ENCODE measurements at regions of chr12 and their contacts with region 1.

Region 1: DNA sequence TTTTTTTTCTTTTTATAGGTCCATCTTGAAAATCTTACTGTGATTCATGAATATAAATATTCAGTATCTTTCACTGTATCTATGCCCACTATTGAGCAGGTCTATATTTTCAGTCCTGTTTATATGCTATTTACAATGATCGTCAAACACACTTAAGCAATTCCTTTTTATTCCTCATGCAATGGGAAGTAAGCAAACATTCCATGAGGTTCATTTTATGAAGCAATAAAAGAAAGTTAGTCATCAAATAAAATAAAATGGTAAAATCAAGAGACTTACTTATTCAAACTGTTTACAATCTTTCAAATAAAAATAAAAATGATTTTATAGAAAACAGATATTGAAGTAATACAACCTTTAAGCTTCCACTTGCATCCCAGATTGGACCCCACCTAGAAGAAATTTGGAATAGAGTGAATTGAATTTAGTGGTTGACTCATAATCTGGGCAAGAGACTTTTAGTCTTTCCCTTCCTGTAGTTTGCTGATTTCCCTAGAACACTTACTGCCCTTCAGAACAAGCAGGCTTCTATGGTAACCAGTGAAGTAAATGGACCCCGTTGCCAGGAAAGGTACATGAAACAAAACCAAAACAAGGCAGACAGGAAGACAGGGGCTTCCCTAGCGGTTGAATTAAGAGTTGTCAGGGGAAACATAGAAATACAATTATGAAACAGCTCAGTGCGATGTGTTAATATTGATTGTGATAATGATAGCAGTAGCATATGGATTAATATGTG is 241.0 kb upstream of the ATP2B1 start:
- DNase-seq: peak in 7 of 9 donors; percentile 66 to 89 (median 81)
- ATAC-seq: peak; percentile 95
- H3K4me3 ChIP-seq: peak overlapping the region; percentile 2
- H3K4me3 Mint-ChIP-seq: peak overlapping the region in 9 of 10 donors; percentile 1 to 76 (median 64)
- H3K27ac ChIP-seq: peak overlapping the region; percentile 53
- H3K27ac Mint-ChIP-seq: peak overlapping the region in 8 of 9 donors; percentile 62 to 89 (median 76)
- H3K4me1 ChIP-seq: peaks cover 24 to 33% of the 10 kb centered on the region in 2 donors
- H3K4me1 Mint-ChIP-seq: peaks cover 20 to 58% (median 44%) of the 10 kb centered on the region in 7 donors
- H3K27me3 ChIP-seq: no peaks in the 10 kb centered on the region
- H3K27me3 Mint-ChIP-seq: no peaks in the 10 kb centered on the region

Region 2: GRCh38 chr12:89621521-89621920 is 328.1 kb before region 1 on chr12:
- CTCF ChIA-PET with region 1: no interaction called
- POLR2A ChIA-PET with region 1: no interaction called
- intact Hi-C with region 1: loop called in 1 of 2 experiments (anchors 5 kb)
- DNase-seq: no peak
- ATAC-seq: no peak
- H3K4me3 ChIP-seq: no peak overlapping the region
- H3K4me3 Mint-ChIP-seq: no peak overlapping the region
- H3K27ac ChIP-seq: no peak overlapping the region
- H3K27ac Mint-ChIP-seq: no peak overlapping the region
- H3K4me1 ChIP-seq: no peaks in the 10 kb centered on the region
- H3K4me1 Mint-ChIP-seq: peaks cover 0 to 4% (median 0%) of the 10 kb centered on the region in 7 donors
- H3K27me3 ChIP-seq: no peaks in the 10 kb centered on the region
- H3K27me3 Mint-ChIP-seq: no peaks in the 10 kb centered on the region

Region 3: GRCh38 chr12:89756585-89757321 is 192.9 kb before region 1 on chr12:
- CTCF ChIA-PET with region 1: interaction called, 3 read pairs
- POLR2A ChIA-PET with region 1: no interaction called
- intact Hi-C with region 1: loop called in 1 of 2 experiments (anchors 5 kb)
- DNase-seq: peak in 3 of 9 donors; percentile 11 to 31 (median 12)
- ATAC-seq: peak; percentile 86
- H3K4me3 ChIP-seq: no peak overlapping the region
- H3K4me3 Mint-ChIP-seq: peak overlapping the region in 1 of 10 donors; percentile 1
- H3K27ac ChIP-seq: no peak overlapping the region
- H3K27ac Mint-ChIP-seq: peak overlapping the region in 4 of 9 donors; percentile 6 to 75 (median 42)
- H3K4me1 ChIP-seq: peaks cover 4 to 28% of the 10 kb centered on the region in 2 donors
- H3K4me1 Mint-ChIP-seq: peaks cover 14 to 28% (median 25%) of the 10 kb centered on the region in 7 donors
- H3K27me3 ChIP-seq: no peaks in the 10 kb centered on the region
- H3K27me3 Mint-ChIP-seq: no peaks in the 10 kb centered on the region

Region 4: GRCh38 chr12:89840162-89840922 is 109.3 kb before region 1 on chr12:
- CTCF ChIA-PET with region 1: no interaction called
- POLR2A ChIA-PET with region 1: no interaction called
- intact Hi-C with region 1: no loop called
- DNase-seq: no peak
- ATAC-seq: no peak
- H3K4me3 ChIP-seq: no peak overlapping the region
- H3K4me3 Mint-ChIP-seq: no peak overlapping the region
- H3K27ac ChIP-seq: no peak overlapping the region
- H3K27ac Mint-ChIP-seq: no peak overlapping the region
- H3K4me1 ChIP-seq: no peaks in the 10 kb centered on the region
- H3K4me1 Mint-ChIP-seq: peaks cover 0 to 10% (median 9%) of the 10 kb centered on the region in 7 donors
- H3K27me3 ChIP-seq: no peaks in the 10 kb centered on the region
- H3K27me3 Mint-ChIP-seq: peaks cover 0 to 8% (median 0%) of the 10 kb centered on the region in 5 donors

Region 5: DNA sequence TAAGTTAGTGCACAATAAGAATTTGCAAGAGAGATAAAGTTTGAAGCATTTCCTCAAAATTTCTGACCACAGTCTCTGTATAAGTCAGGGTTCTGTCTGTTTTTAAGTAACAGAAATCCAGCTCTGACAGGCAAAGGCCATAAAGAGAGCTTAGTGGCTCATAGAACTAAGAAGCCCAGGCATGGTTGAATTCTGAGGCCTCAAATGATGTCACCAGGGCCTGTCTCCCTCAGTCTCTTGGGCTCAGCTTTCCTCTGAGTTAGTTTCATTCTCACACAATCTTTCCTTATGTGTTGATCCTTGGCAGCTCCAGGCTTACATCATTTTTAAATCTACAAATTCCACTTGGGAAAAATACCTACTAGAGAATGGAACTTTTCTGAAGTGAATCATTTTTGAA is 67.6 kb before region 1 on chr12:
- CTCF ChIA-PET with region 1: interaction called, 3 read pairs
- POLR2A ChIA-PET with region 1: no interaction called
- intact Hi-C with region 1: loop called (anchors 1 kb)
- DNase-seq: no peak
- ATAC-seq: peak; percentile 31
- H3K4me3 ChIP-seq: no peak overlapping the region
- H3K4me3 Mint-ChIP-seq: peak overlapping the region in 7 of 10 donors; percentile 30 to 83 (median 75)
- H3K27ac ChIP-seq: peak overlapping the region; percentile 28
- H3K27ac Mint-ChIP-seq: peak overlapping the region; percentile 82 to 95 (median 91)
- H3K4me1 ChIP-seq: peaks cover 31 to 36% of the 10 kb centered on the region in 2 donors
- H3K4me1 Mint-ChIP-seq: peaks cover 23 to 62% (median 57%) of the 10 kb centered on the region in 7 donors
- H3K27me3 ChIP-seq: no peaks in the 10 kb centered on the region
- H3K27me3 Mint-ChIP-seq: peaks cover 0 to 3% (median 0%) of the 10 kb centered on the region in 5 donors

Region 6: DNA sequence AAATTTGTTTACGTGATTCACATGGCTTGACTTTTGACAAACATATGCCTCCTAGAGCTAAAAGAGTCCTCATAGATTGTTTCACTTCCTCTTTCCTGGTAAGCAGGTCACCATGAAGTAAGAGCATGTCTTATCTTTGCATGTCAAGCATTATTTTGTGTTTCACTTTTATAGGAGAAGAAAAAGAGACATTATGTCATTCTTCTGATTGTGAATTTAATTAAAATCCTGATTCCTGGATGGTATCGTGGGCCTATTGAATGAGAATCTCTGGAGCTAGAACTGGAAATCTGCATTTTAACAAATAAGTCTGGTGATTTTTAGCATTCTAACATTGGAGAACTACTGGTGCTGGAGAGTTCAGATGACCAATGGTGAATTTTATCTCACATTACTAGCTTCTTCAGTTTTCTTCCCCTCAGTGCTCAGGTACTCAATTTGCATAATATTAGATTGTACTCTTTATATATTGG is 22.4 kb before region 1 on chr12:
- CTCF ChIA-PET with region 1: interaction called, 3 read pairs
- POLR2A ChIA-PET with region 1: no interaction called
- intact Hi-C with region 1: loop called (anchors 2 kb)
- DNase-seq: no peak
- ATAC-seq: peak; percentile 74
- H3K4me3 ChIP-seq: no peak overlapping the region
- H3K4me3 Mint-ChIP-seq: peak overlapping the region in 2 of 10 donors; percentile 0 to 13
- H3K27ac ChIP-seq: no peak overlapping the region
- H3K27ac Mint-ChIP-seq: peak overlapping the region in 2 of 9 donors; percentile 24 to 42
- H3K4me1 ChIP-seq: no peaks in the 10 kb centered on the region
- H3K4me1 Mint-ChIP-seq: peaks cover 0 to 9% (median 7%) of the 10 kb centered on the region in 7 donors
- H3K27me3 ChIP-seq: no peaks in the 10 kb centered on the region
- H3K27me3 Mint-ChIP-seq: no peaks in the 10 kb centered on the region

Region 7: DNA sequence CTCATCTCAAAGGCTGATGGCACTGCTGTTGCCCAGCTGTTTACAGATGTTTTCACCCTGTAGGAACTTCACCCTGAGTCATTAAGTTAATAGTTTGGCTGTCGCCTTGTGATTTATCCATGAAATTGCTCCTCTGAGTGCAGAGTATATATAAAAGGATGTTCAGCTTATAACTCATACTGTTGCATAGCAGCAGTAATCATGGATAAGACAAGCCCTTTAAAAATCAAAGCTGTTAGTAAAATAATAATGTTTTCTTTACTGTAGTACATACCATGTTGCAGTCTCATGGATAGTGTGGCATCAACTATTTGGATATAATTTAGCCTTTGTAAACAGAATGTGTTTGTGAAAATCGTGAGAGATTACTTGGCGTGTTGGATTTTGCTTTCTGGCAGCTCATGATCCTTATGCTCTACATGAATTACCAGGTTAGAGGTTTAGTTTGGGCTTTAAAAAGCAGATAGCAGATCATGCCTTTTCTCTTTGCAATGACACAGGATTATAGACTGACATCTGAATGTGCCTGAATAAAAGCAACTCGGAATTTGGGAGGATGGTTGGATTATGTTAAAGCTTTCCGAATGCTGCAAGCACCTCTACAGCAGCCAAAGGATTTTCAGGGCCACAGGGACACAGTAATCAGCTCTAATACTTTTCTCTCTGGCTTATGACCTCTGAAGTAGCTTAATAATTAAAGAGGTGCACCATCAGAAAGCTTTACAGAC is 38.7 kb after region 1 on chr12:
- CTCF ChIA-PET with region 1: no interaction called
- POLR2A ChIA-PET with region 1: no interaction called
- intact Hi-C with region 1: no loop called
- DNase-seq: no peak
- ATAC-seq: no peak
- H3K4me3 ChIP-seq: no peak overlapping the region
- H3K4me3 Mint-ChIP-seq: no peak overlapping the region
- H3K27ac ChIP-seq: no peak overlapping the region
- H3K27ac Mint-ChIP-seq: no peak overlapping the region
- H3K4me1 ChIP-seq: peaks cover 0 to 12% of the 10 kb centered on the region in 2 donors
- H3K4me1 Mint-ChIP-seq: peaks cover 2 to 23% (median 14%) of the 10 kb centered on the region in 7 donors
- H3K27me3 ChIP-seq: no peaks in the 10 kb centered on the region
- H3K27me3 Mint-ChIP-seq: no peaks in the 10 kb centered on the region

Region 8: GRCh38 chr12:90091021-90091651 is 141.5 kb after region 1 on chr12:
- CTCF ChIA-PET with region 1: no interaction called
- POLR2A ChIA-PET with region 1: no interaction called
- intact Hi-C with region 1: loop called in 1 of 2 experiments (anchors 1 kb)
- DNase-seq: peak in 1 of 9 donors; percentile 36
- ATAC-seq: peak; percentile 76
- H3K4me3 ChIP-seq: no peak overlapping the region
- H3K4me3 Mint-ChIP-seq: no peak overlapping the region
- H3K27ac ChIP-seq: no peak overlapping the region
- H3K27ac Mint-ChIP-seq: no peak overlapping the region
- H3K4me1 ChIP-seq: no peaks in the 10 kb centered on the region
- H3K4me1 Mint-ChIP-seq: peaks cover 0 to 16% (median 5%) of the 10 kb centered on the region in 7 donors
- H3K27me3 ChIP-seq: no peaks in the 10 kb centered on the region
- H3K27me3 Mint-ChIP-seq: no peaks in the 10 kb centered on the region